ENCODE measurements at regions of chr14 and their contacts with region 1.

Region 1: DNA sequence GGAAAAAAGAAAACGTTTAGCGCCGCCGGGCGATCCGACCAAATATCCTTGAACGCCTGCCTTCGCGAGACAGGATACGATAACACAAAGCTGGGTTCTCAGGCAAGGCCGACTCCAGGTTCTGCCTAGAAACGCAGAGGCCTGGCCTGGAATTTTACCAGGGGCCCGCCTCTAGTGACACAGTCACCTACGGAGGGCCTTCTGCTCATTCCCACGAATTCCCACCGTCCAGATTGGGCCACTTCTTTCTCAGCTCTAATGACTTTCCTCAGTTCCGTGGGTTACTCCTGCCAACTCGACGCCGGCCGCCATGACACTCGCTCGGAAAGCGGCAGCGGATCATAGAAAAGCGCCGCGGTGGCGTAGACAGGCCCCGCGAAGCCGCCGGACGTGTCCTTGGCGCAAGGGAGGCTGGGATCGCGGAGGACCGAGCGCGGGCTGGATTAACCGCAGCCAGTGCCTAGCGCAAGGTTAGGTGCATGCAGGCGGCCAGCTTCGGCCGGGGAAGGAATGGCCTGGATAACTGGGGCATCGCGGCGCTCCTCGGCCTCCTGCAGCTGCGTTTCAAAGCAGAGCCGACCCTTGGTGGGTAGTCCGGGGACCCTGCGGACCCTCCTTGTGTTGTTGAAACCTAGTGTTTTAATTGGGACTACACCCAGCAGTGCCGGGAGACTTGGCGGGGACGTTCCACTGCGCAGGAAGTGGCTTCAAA is at the start of gene TRIP11:
- DNase-seq: peak; percentile 96 to 97
- ATAC-seq: peak; percentile 99
- H3K4me3 ChIP-seq: peak within 1 kb of the TSS; percentile 90
- H3K27ac ChIP-seq: peak within 1 kb of the TSS; percentile 98
- H3K4me1 ChIP-seq: peaks cover 34% of the 10 kb centered on the region
- H3K27me3 ChIP-seq: no peaks in the 10 kb centered on the region
- CTCF ChIP-seq: no peak
- total RNA-seq, gene TRIP11: 47.5 to 54.8 (median 51.4) TPM

Region 2: GRCh38 chr14:91770185-91770584 is 269.7 kb before region 1 on chr14:
- intact Hi-C with region 1: no loop called
- DNase-seq: no peak
- ATAC-seq: no peak
- H3K4me3 ChIP-seq: no peak overlapping the region
- H3K27ac ChIP-seq: no peak overlapping the region
- H3K4me1 ChIP-seq: no peaks in the 10 kb centered on the region
- H3K27me3 ChIP-seq: no peaks in the 10 kb centered on the region
- CTCF ChIP-seq: no peak

Region 3: DNA sequence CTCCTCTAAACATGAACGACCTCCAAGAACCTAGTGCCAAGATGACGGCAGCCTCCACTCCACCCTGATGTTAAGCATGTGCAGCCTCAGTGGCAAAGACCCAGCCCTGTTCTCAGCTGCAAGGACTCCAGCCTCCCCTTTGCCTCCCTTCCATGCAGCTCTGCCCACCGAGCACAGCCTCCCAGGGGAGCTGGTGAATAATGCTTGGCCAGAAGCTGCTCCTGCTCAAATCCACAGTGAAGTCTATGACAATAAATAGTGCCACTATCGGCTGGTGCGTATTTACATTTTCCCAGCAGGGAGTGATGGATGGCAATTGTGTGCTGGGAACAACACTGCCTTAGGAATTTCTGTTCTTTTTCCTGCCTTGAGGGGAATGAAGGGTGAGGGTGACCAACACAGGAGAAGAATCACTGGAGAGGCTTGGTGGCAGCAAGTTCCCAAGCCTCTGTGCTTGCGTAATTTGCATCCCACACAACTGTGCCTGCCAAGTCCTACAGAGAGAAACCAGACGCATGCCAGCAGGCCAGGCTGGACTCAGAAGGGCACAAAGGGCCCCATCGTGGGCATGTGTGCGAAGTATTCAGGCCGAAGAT is 142.7 kb before region 1 on chr14:
- intact Hi-C with region 1: no loop called
- DNase-seq: peak; percentile 56 to 62
- ATAC-seq: peak in 3 of 4 donors; percentile 27 to 53 (median 36)
- H3K4me3 ChIP-seq: no peak overlapping the region
- H3K27ac ChIP-seq: no peak overlapping the region
- H3K4me1 ChIP-seq: no peaks in the 10 kb centered on the region
- H3K27me3 ChIP-seq: peaks cover 0 to 10% (median 1%) of the 10 kb centered on the region in 3 donors
- CTCF ChIP-seq: no peak

Region 4: DNA sequence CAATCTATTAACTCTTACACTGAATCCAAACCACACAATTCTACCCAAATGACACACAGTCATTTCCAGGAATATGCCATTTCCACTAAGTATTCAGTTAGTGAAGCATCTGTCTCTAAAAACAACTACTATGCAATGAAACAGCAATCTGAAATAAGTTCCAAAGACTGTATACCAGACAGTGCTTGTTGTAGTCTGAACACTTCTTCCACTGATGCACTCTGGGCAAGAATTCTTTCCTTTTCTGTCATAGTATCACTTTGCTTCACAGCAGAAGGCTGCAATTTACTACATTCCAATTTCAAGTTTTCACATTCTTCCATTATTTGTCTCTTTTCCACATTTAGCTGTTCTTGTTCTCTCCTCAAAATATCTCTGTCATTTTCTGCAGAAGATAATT is 25.8 kb before region 1 on chr14:
- intact Hi-C with region 1: no loop called
- DNase-seq: no peak
- ATAC-seq: no peak
- H3K4me3 ChIP-seq: no peak overlapping the region
- H3K27ac ChIP-seq: no peak overlapping the region
- H3K4me1 ChIP-seq: no peaks in the 10 kb centered on the region
- H3K27me3 ChIP-seq: no peaks in the 10 kb centered on the region
- CTCF ChIP-seq: no peak

Region 5: GRCh38 chr14:92106143-92106926 is 66.5 kb after region 1 on chr14 and contains the start of gene ATXN3:
- intact Hi-C with region 1: loop called (anchors 2 to 5 kb)
- DNase-seq: peak; percentile 98
- ATAC-seq: peak; percentile 96 to 99 (median 98)
- H3K4me3 ChIP-seq: peak within 1 kb of the TSS; percentile 97
- H3K27ac ChIP-seq: peak within 1 kb of the TSS; percentile 91
- H3K4me1 ChIP-seq: peaks cover 12% of the 10 kb centered on the region
- H3K27me3 ChIP-seq: no peaks in the 10 kb centered on the region
- CTCF ChIP-seq: peak; percentile 66
- total RNA-seq, gene ATXN3: 5.6 to 10.0 (median 7.8) TPM

Measured in psoas muscle (tissue), 8 donors.